BJ (cell line): ENCODE measurements at regions of chr2 and their contacts with region 1.

Region 1: GRCh38 chr2:18520451-18521425 is 39.7 kb downstream of the RDH14 start:
- DNase-seq: no peak
- H3K4me3 ChIP-seq: no peak overlapping the region
- H3K27me3 ChIP-seq: no peaks in the 10 kb centered on the region
- CTCF ChIP-seq: peak; percentile 91

Region 2: DNA sequence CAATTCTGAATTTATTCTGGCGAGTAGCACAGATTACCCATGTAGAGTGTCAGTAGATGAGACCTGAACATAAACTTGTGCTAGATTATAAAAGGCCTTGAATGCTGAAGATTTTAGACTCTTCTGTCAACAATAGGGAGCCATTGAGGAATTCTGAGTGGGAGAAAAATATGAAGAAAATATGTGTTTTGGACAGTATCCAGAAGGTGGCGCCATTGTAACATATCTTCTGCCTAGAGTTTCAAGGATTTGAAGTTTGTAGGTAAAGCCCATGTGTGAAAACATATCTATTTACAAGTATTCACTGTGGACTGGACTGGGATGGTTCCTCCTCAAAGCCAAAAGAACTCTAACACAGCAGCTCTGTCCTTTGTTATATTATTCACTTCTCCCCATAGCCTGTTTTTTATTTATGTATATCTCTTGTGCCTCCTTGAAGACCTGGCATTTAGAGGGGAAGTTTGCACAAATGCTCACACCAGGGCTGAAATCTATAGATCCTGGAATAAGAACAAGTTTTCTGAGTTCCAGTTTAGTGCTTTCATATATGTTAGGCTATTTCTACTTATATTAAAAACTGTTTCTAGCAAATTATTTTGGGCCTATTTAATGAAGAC is 85.2 kb before region 1 on chr2:
- CTCF ChIA-PET with region 1: interaction called, 11 read pairs
- POLR2A ChIA-PET with region 1: interaction called, 3 read pairs
- DNase-seq: no peak
- H3K4me3 ChIP-seq: no peak overlapping the region
- H3K27me3 ChIP-seq: no peaks in the 10 kb centered on the region
- CTCF ChIP-seq: peak; percentile 54; the same call in 1 of the 2 replicates

Region 3: DNA sequence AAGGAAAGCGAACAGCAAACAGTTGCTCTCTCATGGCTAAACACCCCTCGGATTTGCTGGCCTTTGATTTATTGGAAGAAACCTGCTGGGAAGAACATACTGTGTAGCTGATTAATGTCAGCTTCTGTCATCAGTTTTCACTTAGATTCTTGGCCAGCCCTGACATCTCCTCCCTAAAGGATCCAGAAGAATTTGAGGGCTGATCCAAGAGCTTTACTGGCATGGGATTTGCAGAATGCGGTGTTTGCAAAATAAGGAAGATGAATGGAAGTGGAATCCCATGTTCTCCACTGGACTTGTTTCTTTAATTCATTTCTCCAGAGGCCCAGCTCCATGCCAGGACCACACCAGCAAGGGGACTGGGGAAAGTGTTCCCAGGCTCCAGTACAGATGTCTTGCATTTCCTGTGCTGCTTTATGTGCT is 40.8 kb before region 1 on chr2:
- CTCF ChIA-PET with region 1: no interaction called
- POLR2A ChIA-PET with region 1: no interaction called
- DNase-seq: no peak
- H3K4me3 ChIP-seq: no peak overlapping the region
- H3K27me3 ChIP-seq: no peaks in the 10 kb centered on the region
- CTCF ChIP-seq: no peak

Region 4: GRCh38 chr2:18741895-18742732 is 221.4 kb after region 1 on chr2:
- CTCF ChIA-PET with region 1: interaction called, 41 read pairs
- POLR2A ChIA-PET with region 1: interaction called, 3 read pairs
- DNase-seq: no peak
- H3K4me3 ChIP-seq: no peak overlapping the region
- H3K27me3 ChIP-seq: no peaks in the 10 kb centered on the region
- CTCF ChIP-seq: no peak

Region 5: DNA sequence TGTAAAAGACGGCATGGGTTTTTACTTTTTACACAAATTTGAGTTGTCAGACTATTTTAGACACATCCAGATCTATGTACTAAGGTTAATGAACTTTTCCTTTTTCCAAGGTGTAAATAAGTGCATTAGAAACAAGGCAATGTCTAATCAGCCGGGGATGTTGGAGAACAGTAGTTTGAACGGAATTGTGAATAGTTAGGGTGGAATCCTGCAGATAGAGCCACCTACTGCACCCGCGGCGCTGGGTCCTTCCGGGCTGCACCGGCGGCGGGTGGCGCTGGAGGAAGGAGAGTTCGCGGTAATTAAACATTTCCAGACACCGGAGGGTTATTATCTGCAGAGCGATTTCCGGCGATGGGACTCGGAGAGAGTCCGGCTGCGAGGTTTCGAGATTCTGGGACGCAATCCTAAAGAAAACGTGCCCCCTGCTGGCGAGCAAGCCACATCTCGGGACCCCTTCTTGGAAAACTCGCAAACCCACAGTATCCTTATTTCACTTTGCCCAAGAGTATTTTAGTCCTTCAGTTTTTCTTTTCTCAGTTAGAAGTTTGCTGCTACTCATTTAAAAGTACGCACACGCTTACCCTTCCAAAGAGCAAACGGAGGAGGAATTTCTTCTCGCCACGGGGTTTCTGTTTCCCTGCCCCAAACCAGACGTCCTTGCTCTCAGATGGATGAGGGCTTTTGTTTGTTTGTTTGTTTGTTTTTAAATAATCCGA is 842.2 kb after region 1 on chr2:
- CTCF ChIA-PET with region 1: interaction called, 13 read pairs
- POLR2A ChIA-PET with region 1: no interaction called
- DNase-seq: peak; percentile 23
- H3K4me3 ChIP-seq: peak overlapping the region; percentile 64
- H3K27me3 ChIP-seq: peaks cover 2% of the 10 kb centered on the region; the same call in 1 of the 2 replicates
- CTCF ChIP-seq: peak; percentile 84

Region 6: GRCh38 chr2:19863303-19864041 is 1342.7 kb after region 1 on chr2:
- CTCF ChIA-PET with region 1: interaction called, 20 read pairs
- POLR2A ChIA-PET with region 1: no interaction called
- DNase-seq: no peak
- H3K4me3 ChIP-seq: no peak overlapping the region
- H3K27me3 ChIP-seq: no peaks in the 10 kb centered on the region
- CTCF ChIP-seq: peak; percentile 88